ENCODE measurements at regions of chr6 and their contacts with region 1.

Region 1: GRCh38 chr6:14754751-14755513 is 490.9 kb upstream of the JARID2 start:
- DNase-seq: peak; percentile 73
- ATAC-seq: peak; percentile 80
- H3K4me3 Mint-ChIP-seq: peak overlapping the region; percentile 28
- H3K27ac Mint-ChIP-seq: peak overlapping the region; percentile 88
- H3K4me1 Mint-ChIP-seq: peaks cover 18% of the 10 kb centered on the region
- H3K27me3 Mint-ChIP-seq: no peaks in the 10 kb centered on the region
- CTCF ChIP-seq: no peak

Region 2: DNA sequence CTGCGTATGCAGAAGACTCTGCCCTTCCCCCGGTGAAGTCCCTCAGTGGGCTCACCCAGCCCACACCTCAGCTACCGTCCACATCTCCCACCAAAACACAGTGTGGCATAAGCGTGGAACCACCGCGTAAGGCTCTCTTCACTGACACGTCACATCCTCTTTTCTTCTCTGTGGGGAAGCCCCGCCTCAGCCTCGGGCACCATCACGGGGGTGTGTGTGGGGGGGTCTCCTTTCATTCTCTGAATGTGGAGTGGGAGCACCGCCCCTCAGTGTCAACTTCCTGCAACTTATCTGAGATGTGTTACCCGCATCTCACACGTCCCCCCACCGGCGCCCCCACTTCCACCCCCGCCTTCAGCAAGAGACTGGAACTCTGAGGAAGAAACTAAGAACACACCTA is 102.6 kb after region 1 on chr6:
- CTCF ChIA-PET with region 1: no interaction called
- POLR2A ChIA-PET with region 1: no interaction called
- intact Hi-C with region 1: loop called (anchors 5 kb)
- DNase-seq: peak; percentile 93
- ATAC-seq: peak; percentile 90
- H3K4me3 Mint-ChIP-seq: peak overlapping the region; percentile 18
- H3K27ac Mint-ChIP-seq: peak overlapping the region; percentile 88
- H3K4me1 Mint-ChIP-seq: peaks cover 52% of the 10 kb centered on the region
- H3K27me3 Mint-ChIP-seq: no peaks in the 10 kb centered on the region
- CTCF ChIP-seq: no peak

Measured in activated CD8-positive, alpha-beta T cell treated with anti-CD3 and anti-CD28 coated beads for 36 hours (primary cell).